GM18951 (cell line): ENCODE measurements at regions of chr18 and their contacts with region 1.

Region 1: DNA sequence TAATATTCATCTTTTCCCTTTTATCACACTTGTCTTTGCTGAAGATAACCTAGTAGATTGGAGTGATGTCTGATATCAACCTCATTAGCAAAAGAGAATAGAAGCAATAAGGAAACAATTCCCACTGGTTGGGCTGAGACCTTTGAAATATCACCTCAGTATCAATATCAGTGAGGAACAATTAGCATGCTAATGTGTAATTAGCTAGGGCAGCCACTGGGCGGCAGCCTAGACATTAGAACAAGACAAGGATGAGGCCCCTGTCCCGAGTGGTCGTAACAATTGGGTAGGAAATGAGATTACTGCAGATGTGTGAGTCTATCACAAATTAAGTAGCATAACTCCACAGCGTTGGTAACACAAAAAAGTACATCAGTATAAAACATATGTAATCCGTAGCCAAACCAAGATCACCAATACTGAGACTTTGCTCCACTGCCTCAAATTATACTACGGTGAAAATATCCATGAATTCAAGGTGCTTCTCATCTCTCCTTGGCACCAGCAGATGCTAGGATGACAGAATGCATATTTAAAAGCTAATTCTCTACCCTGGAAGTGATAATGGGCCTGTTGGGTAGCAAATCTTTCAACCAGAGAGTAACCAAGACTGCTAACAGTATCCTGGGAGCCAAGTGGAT is 99.1 kb downstream of the ALPK2 start:
- POLR2A ChIP-seq: no peak

Region 2: GRCh38 chr18:58671111-58671631 is 141.3 kb after region 1 on chr18 and contains the start of gene MALT1:
- in situ Hi-C with region 1: loop called (anchors 5 kb)
- POLR2A ChIP-seq: peak; percentile 96

Region 3: DNA sequence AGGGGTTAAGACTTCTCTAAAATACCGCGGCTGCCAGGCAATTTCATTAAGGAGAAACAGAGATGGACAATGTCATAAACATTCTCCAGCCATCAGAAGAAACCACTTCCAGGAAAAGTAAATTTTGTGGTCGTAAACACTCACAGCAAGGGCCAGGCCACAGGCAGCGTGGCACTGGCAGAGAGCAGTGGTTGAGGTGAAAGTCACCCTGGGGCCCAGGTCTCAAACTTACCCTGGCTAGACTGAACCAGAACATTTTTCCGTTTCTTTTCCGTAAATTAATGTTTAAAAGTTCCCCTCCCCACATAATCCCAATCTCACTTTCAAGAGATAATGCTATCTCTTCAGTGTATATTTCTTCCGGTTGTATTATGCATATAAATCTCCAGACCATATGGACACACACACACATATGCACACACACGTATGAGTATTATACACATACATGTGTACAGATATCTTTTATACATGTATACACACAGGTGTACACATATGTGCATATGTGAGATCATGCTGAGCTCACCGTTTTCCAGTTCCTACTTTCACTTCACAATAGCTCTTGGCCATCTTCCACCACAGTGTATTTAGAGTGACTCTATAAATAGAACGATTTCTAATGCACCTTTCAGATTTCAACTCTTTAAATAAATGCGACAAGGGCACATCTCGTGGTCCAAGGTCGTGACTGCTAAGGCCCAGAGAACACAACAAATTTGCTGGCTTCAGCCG is 231.6 kb after region 1 on chr18:
- in situ Hi-C with region 1: loop called (anchors 5 kb)
- POLR2A ChIP-seq: no peak